ENCODE measurements at regions of chr12 and their contacts with region 1.

Region 1: GRCh38 chr12:13546231-13546630 is 349.7 kb downstream of the EMP1 start:
- DNase-seq: no peak
- ATAC-seq: no peak
- H3K4me3 Mint-ChIP-seq: no peak overlapping the region
- H3K27ac Mint-ChIP-seq: no peak overlapping the region
- H3K4me1 Mint-ChIP-seq: no peaks in the 10 kb centered on the region
- H3K27me3 Mint-ChIP-seq: peaks cover 6% of the 10 kb centered on the region

Region 2: DNA sequence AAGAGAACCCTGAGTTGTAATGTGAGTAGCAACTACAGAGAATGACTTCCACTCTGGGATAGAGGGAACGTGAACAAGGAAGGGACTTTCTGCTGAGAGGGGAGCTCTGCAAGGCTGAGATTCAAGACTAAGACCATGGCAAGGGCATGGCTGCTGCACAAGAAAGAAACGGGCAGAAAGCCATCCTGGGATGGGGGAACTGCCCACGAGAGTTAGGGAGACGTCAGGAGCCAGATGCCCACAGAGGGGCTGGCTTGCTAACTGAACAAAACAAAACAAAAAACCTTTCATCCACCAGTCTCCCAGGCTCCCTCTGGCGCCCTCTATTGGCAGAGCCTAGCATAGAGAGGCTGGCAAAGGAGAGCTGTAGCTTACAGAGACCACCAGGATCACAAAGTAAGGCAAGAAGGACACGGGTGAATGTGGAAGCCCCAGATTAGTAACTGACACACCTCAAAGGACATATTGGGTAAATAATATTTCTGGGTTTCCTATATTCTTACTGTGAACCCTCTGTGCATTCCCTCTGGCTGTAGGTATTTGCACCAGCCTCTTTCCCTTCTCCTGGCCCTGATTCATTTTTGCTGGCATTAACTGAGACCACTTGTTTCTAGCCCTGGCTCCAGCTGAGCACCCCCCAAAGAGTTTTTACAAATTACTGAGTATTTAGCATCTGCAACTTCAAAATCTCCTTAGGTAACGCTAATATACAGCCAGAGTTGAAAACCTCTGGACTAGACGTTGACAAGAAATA is 11.4 kb before region 1 on chr12:
- CTCF ChIA-PET with region 1: interaction called, 13 read pairs
- POLR2A ChIA-PET with region 1: no interaction called
- intact Hi-C with region 1: no loop called
- DNase-seq: peak; percentile 78
- ATAC-seq: no peak
- H3K4me3 Mint-ChIP-seq: no peak overlapping the region
- H3K27ac Mint-ChIP-seq: no peak overlapping the region
- H3K4me1 Mint-ChIP-seq: peaks cover 6% of the 10 kb centered on the region
- H3K27me3 Mint-ChIP-seq: peaks cover 17% of the 10 kb centered on the region